ENCODE measurements at regions of chr4 and their contacts with region 1.

Region 1: DNA sequence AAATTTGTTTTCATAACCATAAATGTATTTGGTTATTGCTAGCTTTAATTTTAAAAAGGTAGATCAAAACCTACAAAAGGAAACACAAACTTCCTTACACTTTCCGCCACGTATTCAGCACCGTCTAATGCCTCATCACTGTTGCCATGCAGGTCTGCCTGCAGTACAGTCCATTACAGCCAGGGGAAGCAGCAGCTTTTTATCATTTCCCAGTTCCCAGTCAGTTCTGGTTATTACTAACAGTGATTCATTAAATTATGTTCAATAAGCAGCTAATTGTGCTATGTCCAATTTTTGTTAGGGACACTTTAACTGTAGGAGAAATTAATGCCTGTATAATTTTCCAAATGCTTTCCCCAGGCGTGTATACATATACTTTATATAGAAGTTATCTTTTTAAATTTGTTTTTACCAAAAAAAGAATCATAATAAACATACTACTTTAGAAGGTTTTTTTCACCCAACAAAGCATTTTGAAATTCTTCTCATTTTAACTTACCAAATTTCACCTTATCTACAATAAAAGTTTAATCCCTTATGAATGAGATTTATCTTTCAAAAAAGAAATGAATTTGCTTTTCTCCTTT is 93.3 kb downstream of the ANXA3 start:
- DNase-seq: peak; percentile 71
- H3K4me3 ChIP-seq: no peak overlapping the region
- H3K27ac ChIP-seq: peak overlapping the region; percentile 79
- H3K4me1 ChIP-seq: peaks cover 28% of the 10 kb centered on the region
- H3K27me3 ChIP-seq: no peaks in the 10 kb centered on the region
- CTCF ChIP-seq: peak; percentile 98 to 99

Region 2: GRCh38 chr4:78622253-78622979 is 22.4 kb before region 1 on chr4:
- CTCF ChIA-PET with region 1: no interaction called
- dilution Hi-C with region 1: no loop called
- in situ Hi-C with region 1: no loop called
- intact Hi-C with region 1: loop called (anchors 1 kb)
- DNase-seq: no peak
- H3K4me3 ChIP-seq: no peak overlapping the region
- H3K27ac ChIP-seq: no peak overlapping the region
- H3K4me1 ChIP-seq: peaks cover 4% of the 10 kb centered on the region
- H3K27me3 ChIP-seq: no peaks in the 10 kb centered on the region
- CTCF ChIP-seq: no peak

Region 3: GRCh38 chr4:78710536-78710935 is 65.7 kb after region 1 on chr4:
- CTCF ChIA-PET with region 1: no interaction called
- dilution Hi-C with region 1: no loop called
- in situ Hi-C with region 1: no loop called
- intact Hi-C with region 1: loop called (anchors 1 kb)
- DNase-seq: peak; percentile 89
- H3K4me3 ChIP-seq: no peak overlapping the region
- H3K27ac ChIP-seq: no peak overlapping the region
- H3K4me1 ChIP-seq: no peaks in the 10 kb centered on the region
- H3K27me3 ChIP-seq: no peaks in the 10 kb centered on the region
- CTCF ChIP-seq: no peak

Region 4: DNA sequence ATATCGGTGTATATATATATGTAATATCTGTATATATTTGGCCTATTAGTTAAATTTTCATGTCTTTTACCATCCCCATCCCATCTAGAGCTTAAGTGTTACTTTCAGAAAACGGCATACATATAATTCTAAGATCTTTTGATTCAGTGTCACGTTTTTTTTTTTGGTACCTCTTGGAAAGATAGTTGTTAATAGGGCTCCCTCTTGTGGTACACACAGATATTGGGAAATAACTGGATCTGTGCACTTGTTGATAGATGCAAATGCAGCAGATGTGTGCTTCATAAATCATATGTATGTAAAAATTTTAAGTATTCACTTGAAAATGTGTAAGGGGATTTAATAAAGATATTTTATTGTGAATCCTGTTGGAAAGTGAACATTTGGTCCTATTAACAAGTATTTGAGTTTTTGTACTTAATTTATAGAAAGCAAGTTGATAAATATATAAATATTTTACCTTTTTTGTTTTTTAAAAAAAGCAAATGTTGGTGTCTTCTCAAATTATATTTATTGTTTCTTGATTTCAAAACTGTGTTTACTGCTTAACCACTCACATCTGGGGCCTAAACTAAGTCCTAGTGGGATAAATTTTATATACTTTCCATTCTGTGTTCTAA is 219.7 kb after region 1 on chr4:
- CTCF ChIA-PET with region 1: no interaction called
- dilution Hi-C with region 1: no loop called
- in situ Hi-C with region 1: no loop called
- intact Hi-C with region 1: loop called (anchors 1 kb)
- DNase-seq: peak; percentile 58
- H3K4me3 ChIP-seq: no peak overlapping the region
- H3K27ac ChIP-seq: no peak overlapping the region
- H3K4me1 ChIP-seq: no peaks in the 10 kb centered on the region
- H3K27me3 ChIP-seq: no peaks in the 10 kb centered on the region
- CTCF ChIP-seq: peak; percentile 73

Region 5: DNA sequence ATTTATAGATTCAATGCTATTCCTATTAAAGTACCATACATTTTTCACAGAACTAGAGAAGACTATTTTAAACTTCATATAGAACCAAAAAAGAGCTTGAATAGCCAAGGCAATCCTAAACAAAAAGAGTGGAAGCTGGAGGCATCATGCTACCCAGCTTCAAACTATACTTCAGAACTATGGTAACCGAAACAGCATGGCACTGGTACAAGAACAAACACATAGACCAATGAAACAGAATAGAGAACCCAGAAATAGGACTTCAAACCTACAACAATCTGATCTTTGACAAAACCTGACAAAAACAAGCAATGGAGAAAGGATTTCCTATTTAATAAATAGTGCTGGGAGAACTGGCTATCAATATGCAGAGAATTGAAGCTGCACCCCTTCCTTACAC is 428.6 kb after region 1 on chr4:
- CTCF ChIA-PET with region 1: no interaction called
- dilution Hi-C with region 1: no loop called
- in situ Hi-C with region 1: no loop called
- intact Hi-C with region 1: no loop called
- DNase-seq: no peak
- H3K4me3 ChIP-seq: no peak overlapping the region
- H3K27ac ChIP-seq: no peak overlapping the region
- H3K4me1 ChIP-seq: no peaks in the 10 kb centered on the region
- H3K27me3 ChIP-seq: no peaks in the 10 kb centered on the region
- CTCF ChIP-seq: no peak